Activated CD4-positive, alpha-beta memory T cell treated with anti-CD3 and anti-CD28 coated beads, Interleukin-2, amount 10 ng/mL, durations not matched to agents 7 days and 5 days (primary cell): ENCODE measurements at regions of chr3 and their contacts with region 1.

Region 1: DNA sequence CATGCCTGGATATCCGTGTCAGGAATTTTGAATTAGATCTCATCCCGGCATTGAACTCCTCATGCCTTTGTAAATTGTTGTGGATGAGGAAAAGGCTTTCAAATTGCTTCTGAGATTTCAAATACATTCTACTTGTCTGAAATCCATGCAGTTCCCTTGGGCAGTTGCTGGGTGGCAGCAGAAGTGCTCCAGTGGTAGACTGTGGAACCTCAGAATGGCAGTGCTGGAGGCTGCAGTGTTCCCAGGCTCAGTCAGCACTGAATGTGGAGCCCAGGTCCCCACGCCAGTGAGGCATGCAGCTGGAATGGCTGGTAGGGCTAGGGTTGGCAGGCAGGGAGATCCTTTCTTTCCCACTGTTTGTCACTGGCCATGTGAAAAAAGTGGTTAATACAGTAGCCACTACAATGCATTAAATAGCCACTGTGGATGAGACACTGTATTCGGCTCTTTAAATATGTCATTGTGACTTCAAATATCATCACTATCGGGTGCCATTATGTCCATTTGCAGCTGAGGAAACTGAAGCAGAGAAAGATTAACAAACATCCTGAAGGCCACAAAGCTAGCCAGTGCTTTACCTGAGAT is 98.6 kb downstream of the TPRG1 start:
- DNase-seq: peak; percentile 56
- H3K4me3 Mint-ChIP-seq: no peak overlapping the region
- H3K27ac Mint-ChIP-seq: no peak overlapping the region
- H3K4me1 Mint-ChIP-seq: peaks cover 13% of the 10 kb centered on the region
- H3K27me3 Mint-ChIP-seq: no peaks in the 10 kb centered on the region

Region 2: GRCh38 chr3:189286188-189286587 is 15.8 kb after region 1 on chr3:
- CTCF ChIA-PET with region 1: interaction called, 10 read pairs
- POLR2A ChIA-PET with region 1: no interaction called
- DNase-seq: no peak
- H3K4me3 Mint-ChIP-seq: no peak overlapping the region
- H3K27ac Mint-ChIP-seq: peak overlapping the region; percentile 44
- H3K4me1 Mint-ChIP-seq: peaks cover 32% of the 10 kb centered on the region
- H3K27me3 Mint-ChIP-seq: no peaks in the 10 kb centered on the region

Region 3: GRCh38 chr3:189334064-189334920 is 64.0 kb after region 1 on chr3:
- CTCF ChIA-PET with region 1: interaction called, 10 read pairs
- POLR2A ChIA-PET with region 1: no interaction called
- DNase-seq: no peak
- H3K4me3 Mint-ChIP-seq: no peak overlapping the region
- H3K27ac Mint-ChIP-seq: no peak overlapping the region
- H3K4me1 Mint-ChIP-seq: peaks cover 49% of the 10 kb centered on the region
- H3K27me3 Mint-ChIP-seq: no peaks in the 10 kb centered on the region

Region 4: GRCh38 chr3:189355481-189356201 is 85.3 kb after region 1 on chr3:
- CTCF ChIA-PET with region 1: interaction called, 11 read pairs
- POLR2A ChIA-PET with region 1: interaction called, 4 read pairs
- DNase-seq: peak; percentile 49
- H3K4me3 Mint-ChIP-seq: peak overlapping the region; percentile 13
- H3K27ac Mint-ChIP-seq: peak overlapping the region; percentile 90
- H3K4me1 Mint-ChIP-seq: peaks cover 31% of the 10 kb centered on the region
- H3K27me3 Mint-ChIP-seq: no peaks in the 10 kb centered on the region

Region 5: GRCh38 chr3:189394599-189395121 is 124.3 kb after region 1 on chr3:
- CTCF ChIA-PET with region 1: interaction called, 11 read pairs
- POLR2A ChIA-PET with region 1: no interaction called
- DNase-seq: no peak
- H3K4me3 Mint-ChIP-seq: peak overlapping the region; percentile 47
- H3K27ac Mint-ChIP-seq: peak overlapping the region; percentile 89
- H3K4me1 Mint-ChIP-seq: peaks cover 34% of the 10 kb centered on the region
- H3K27me3 Mint-ChIP-seq: no peaks in the 10 kb centered on the region

Region 6: GRCh38 chr3:189947948-189948723 is 677.8 kb after region 1 on chr3:
- CTCF ChIA-PET with region 1: interaction called, 31 read pairs
- POLR2A ChIA-PET with region 1: no interaction called
- DNase-seq: no peak
- H3K4me3 Mint-ChIP-seq: no peak overlapping the region
- H3K27ac Mint-ChIP-seq: no peak overlapping the region
- H3K4me1 Mint-ChIP-seq: peaks cover 4% of the 10 kb centered on the region
- H3K27me3 Mint-ChIP-seq: peaks cover 8% of the 10 kb centered on the region